Caco-2 (cell line): ENCODE measurements at regions of chr17 and their contacts with region 1.

Region 1: DNA sequence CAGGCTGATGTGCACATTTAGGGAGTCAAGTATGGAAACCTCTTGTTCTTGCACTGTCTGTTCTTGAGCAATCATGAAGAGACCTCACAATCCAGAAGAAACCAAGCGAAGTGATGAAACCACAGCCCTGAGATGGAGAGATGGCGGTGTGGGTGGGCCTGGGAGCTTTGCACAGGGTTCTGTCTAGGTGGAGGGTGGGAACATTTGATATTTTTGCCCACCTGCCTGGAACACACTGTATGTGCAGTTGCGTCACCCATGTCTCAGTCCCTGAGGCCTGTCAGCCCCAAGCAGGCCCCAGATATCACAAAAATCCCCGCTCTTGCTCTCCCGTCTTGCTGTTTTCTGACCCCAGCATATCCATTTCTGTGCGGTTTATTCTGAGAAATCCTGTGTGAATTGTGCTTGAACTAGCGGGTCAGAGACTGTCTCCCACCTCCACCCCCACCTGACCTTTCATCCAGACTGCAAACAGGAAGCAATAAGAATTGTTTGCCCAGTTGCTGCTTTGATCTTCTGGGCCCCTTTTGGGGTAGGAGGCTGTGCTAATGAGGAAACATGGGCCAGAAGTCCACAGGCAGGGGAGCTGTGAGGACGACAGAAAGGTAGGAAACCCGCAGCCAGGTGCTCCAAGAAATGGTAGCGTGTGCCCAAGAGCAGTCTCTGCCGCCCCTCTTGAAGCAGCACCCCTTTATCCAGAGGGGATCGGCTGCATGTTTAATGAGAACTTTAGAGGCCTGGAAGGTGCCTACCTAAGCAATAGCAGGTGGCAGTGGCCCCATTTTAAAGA is 183.8 kb downstream of the CCDC182 start:
- DNase-seq: peak; percentile 85 to 90
- H3K4me3 ChIP-seq: no peak overlapping the region
- H3K4me3 Mint-ChIP-seq: peak overlapping the region; percentile 51
- H3K27ac Mint-ChIP-seq: peak overlapping the region; percentile 53
- H3K4me1 ChIP-seq: peaks cover 43% of the 10 kb centered on the region
- H3K4me1 Mint-ChIP-seq: peaks cover 44% of the 10 kb centered on the region
- H3K27me3 ChIP-seq: no peaks in the 10 kb centered on the region
- H3K27me3 Mint-ChIP-seq: no peaks in the 10 kb centered on the region
- CTCF ChIP-seq: peak in 1 of 2 experiments; percentile 1

Region 2: DNA sequence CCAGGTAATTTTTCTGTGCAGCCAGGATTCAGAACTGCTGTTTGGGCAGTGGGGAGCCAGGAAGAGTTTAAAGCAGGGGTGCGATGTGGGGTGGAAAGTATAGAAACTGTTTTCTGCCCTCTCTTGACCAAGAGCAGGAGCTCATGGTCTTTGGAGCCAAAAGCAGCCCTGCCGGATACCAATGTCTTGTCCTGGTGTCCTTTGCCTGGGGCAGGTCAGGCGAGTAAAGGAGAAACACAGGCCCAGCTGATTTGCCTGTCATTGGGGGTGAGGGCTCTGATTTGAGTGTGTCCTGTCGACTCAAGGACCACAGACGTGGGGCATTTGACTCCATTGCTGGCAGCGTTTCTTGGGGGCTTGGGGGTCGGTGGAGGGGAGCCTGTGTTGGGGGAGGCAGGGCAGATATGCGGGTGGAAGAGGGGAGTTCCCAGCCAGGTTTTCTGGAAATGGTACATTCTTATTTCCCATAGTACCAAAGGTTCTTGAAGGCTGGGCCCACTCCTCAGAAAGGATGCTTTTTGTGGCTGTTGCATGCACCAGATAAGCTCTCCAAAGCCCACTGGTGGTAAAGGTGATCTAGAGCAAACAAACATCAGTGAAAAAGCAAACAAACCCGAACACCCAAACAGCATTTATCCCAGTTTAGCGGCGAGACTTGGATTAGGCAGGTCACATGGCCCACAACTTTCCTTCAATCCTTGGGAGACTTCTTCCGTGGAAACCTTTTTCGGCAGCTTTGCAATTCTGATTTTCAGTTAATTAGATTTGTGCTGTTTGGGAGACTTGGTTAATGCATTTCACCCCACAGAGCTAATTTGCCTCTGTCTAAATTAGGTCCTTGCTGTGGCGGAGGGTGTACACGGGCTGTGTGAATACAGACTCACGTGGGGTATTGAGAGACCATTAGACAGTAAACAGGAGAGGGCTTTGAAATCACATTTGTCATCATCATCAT is 245.9 kb before region 1 on chr17:
- CTCF ChIA-PET with region 1: no interaction called
- POLR2A ChIA-PET with region 1: no interaction called
- intact Hi-C with region 1: no loop called
- DNase-seq: no peak
- H3K4me3 ChIP-seq: no peak overlapping the region
- H3K4me3 Mint-ChIP-seq: no peak overlapping the region
- H3K27ac Mint-ChIP-seq: peak overlapping the region; percentile 15
- H3K4me1 ChIP-seq: peaks cover 7% of the 10 kb centered on the region
- H3K4me1 Mint-ChIP-seq: peaks cover 18% of the 10 kb centered on the region
- H3K27me3 ChIP-seq: no peaks in the 10 kb centered on the region
- H3K27me3 Mint-ChIP-seq: no peaks in the 10 kb centered on the region
- CTCF ChIP-seq: no peak

Region 3: GRCh38 chr17:57528058-57528451 is 33.2 kb before region 1 on chr17:
- CTCF ChIA-PET with region 1: no interaction called
- POLR2A ChIA-PET with region 1: no interaction called
- intact Hi-C with region 1: loop called (anchors 1 kb)
- DNase-seq: peak; percentile 83 to 89
- H3K4me3 ChIP-seq: no peak overlapping the region
- H3K4me3 Mint-ChIP-seq: no peak overlapping the region
- H3K27ac Mint-ChIP-seq: no peak overlapping the region
- H3K4me1 ChIP-seq: peaks cover 70% of the 10 kb centered on the region
- H3K4me1 Mint-ChIP-seq: peaks cover 28% of the 10 kb centered on the region
- H3K27me3 ChIP-seq: no peaks in the 10 kb centered on the region
- H3K27me3 Mint-ChIP-seq: no peaks in the 10 kb centered on the region
- CTCF ChIP-seq: no peak